ENCODE measurements at regions of chr4 and their contacts with region 1.

Region 1: GRCh38 chr4:12852338-12853307 is 631.5 kb downstream of the RAB28 start:
- DNase-seq: peak; percentile 76
- ATAC-seq: peak; percentile 98
- H3K4me3 ChIP-seq: peak overlapping the region in 2 of 3 experiments; percentile 11 to 17; a peak in 1 of 6 replicates
- H3K27ac ChIP-seq: peak overlapping the region; percentile 13
- H3K4me1 ChIP-seq: peaks cover 16% of the 10 kb centered on the region
- H3K27me3 ChIP-seq: no peaks in the 10 kb centered on the region
- CTCF ChIP-seq: peak; percentile 83
- EP300 ChIP-seq: no peak
- POLR2A ChIP-seq: no peak
- RAD21 ChIP-seq: peak; percentile 87

Region 2: DNA sequence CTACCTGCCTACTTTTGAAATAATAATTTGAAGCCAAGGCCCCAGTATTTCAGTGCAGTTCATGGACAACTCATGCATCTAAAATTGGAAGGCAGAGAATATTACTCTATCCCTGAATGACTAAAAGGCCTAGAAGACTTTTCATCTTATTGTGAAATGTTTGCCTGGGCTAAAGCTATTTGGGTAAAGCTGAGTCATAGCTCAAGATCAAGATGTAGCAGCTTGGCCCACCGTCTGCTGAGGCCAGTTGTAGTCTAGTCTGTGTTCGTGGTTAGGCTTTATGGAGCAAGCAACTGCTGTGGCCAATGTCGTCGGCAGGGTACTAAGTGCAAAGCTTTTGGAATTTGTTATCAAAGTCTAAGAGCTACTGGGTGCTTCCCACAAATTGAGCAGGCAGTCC is 297.6 kb before region 1 on chr4:
- CTCF ChIA-PET with region 1: no interaction called
- POLR2A ChIA-PET with region 1: no interaction called
- in situ Hi-C with region 1: no loop called
- intact Hi-C with region 1: no loop called
- DNase-seq: no peak
- ATAC-seq: peak; percentile 82
- H3K4me3 ChIP-seq: no peak overlapping the region
- H3K27ac ChIP-seq: no peak overlapping the region
- H3K4me1 ChIP-seq: peaks cover 10% of the 10 kb centered on the region
- H3K27me3 ChIP-seq: no peaks in the 10 kb centered on the region
- CTCF ChIP-seq: no peak
- EP300 ChIP-seq: peak in 1 of 2 experiments; percentile 22; a peak in 1 of 4 replicates
- POLR2A ChIP-seq: no peak
- RAD21 ChIP-seq: no peak

Region 3: GRCh38 chr4:13059019-13059418 is 206.4 kb after region 1 on chr4:
- CTCF ChIA-PET with region 1: no interaction called
- POLR2A ChIA-PET with region 1: no interaction called
- in situ Hi-C with region 1: no loop called
- intact Hi-C with region 1: loop called (anchors 5 kb)
- DNase-seq: no peak
- ATAC-seq: peak; percentile 61; the same call in 2 of the 3 replicates
- H3K4me3 ChIP-seq: no peak overlapping the region
- H3K27ac ChIP-seq: no peak overlapping the region
- H3K4me1 ChIP-seq: no peaks in the 10 kb centered on the region
- H3K27me3 ChIP-seq: no peaks in the 10 kb centered on the region
- CTCF ChIP-seq: no peak
- EP300 ChIP-seq: no peak
- POLR2A ChIP-seq: no peak
- RAD21 ChIP-seq: no peak

Region 4: GRCh38 chr4:13159041-13159620 is 306.5 kb after region 1 on chr4:
- CTCF ChIA-PET with region 1: no interaction called
- POLR2A ChIA-PET with region 1: no interaction called
- in situ Hi-C with region 1: no loop called
- intact Hi-C with region 1: loop called (anchors 5 kb)
- DNase-seq: peak; percentile 28
- ATAC-seq: peak; percentile 88
- H3K4me3 ChIP-seq: no peak overlapping the region
- H3K27ac ChIP-seq: no peak overlapping the region
- H3K4me1 ChIP-seq: peaks cover 19% of the 10 kb centered on the region
- H3K27me3 ChIP-seq: no peaks in the 10 kb centered on the region
- CTCF ChIP-seq: no peak
- EP300 ChIP-seq: peak in 1 of 2 experiments; percentile 37; a peak in 1 of 4 replicates
- POLR2A ChIP-seq: no peak
- RAD21 ChIP-seq: no peak

Region 5: GRCh38 chr4:13248621-13249298 is 396.1 kb after region 1 on chr4:
- CTCF ChIA-PET with region 1: interaction called, 17 read pairs
- POLR2A ChIA-PET with region 1: interaction called, 5 read pairs
- in situ Hi-C with region 1: loop called (anchors 10 kb)
- intact Hi-C with region 1: loop called (anchors 1 kb)
- DNase-seq: peak; percentile 13
- ATAC-seq: peak; percentile 37; the same call in 1 of the 3 replicates
- H3K4me3 ChIP-seq: no peak overlapping the region
- H3K27ac ChIP-seq: no peak overlapping the region
- H3K4me1 ChIP-seq: peaks cover 13% of the 10 kb centered on the region; the same call in 1 of the 2 replicates
- H3K27me3 ChIP-seq: no peaks in the 10 kb centered on the region
- CTCF ChIP-seq: peak; percentile 49
- EP300 ChIP-seq: no peak
- POLR2A ChIP-seq: no peak
- RAD21 ChIP-seq: no peak

Region 6: DNA sequence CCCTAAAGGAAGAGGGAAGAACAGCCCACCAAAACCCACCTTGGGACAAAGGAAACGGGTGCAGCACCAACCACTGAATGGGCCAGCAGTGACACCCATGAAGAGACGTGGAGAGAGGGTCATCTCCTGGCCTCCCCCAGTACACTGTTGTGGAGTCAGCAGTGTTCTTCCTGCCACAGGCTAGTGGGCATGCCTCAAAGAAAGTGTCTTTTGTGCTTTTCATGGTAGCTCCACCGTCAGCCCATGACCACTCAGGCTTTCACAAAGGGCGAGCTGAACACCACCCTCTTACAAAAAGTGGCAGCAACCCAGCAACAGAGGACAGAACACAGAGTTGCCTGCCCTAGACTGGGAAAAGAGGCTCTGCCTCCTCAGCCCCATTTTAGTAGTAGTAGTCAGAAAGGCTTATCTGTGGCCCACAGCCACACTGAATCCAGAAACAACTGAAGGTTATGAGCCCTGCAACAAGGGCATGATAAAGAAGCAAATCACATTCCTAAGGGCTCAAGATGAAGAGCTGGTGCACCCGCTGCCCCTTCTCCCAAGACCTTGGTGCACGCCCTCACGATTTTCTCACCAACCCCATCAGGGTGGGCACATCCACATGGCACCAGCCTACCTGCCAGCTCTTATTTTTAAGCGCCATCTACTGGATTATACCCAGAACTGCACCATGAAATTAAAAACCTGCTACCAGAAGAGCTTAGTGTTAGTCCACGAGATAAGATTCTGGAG is 578.4 kb after region 1 on chr4:
- CTCF ChIA-PET with region 1: no interaction called
- POLR2A ChIA-PET with region 1: no interaction called
- in situ Hi-C with region 1: no loop called
- intact Hi-C with region 1: loop called (anchors 1 kb)
- DNase-seq: no peak
- ATAC-seq: no peak
- H3K4me3 ChIP-seq: no peak overlapping the region
- H3K27ac ChIP-seq: no peak overlapping the region
- H3K4me1 ChIP-seq: peaks cover 8% of the 10 kb centered on the region; the same call in 1 of the 2 replicates
- H3K27me3 ChIP-seq: no peaks in the 10 kb centered on the region; a peak in 1 of 5 replicates
- CTCF ChIP-seq: peak; percentile 42
- EP300 ChIP-seq: no peak
- POLR2A ChIP-seq: no peak
- RAD21 ChIP-seq: no peak

Region 7: GRCh38 chr4:13548984-13549546 is 696.4 kb after region 1 on chr4:
- CTCF ChIA-PET with region 1: interaction called, 19 read pairs
- POLR2A ChIA-PET with region 1: no interaction called
- in situ Hi-C with region 1: loop called (anchors 5 kb)
- intact Hi-C with region 1: loop called (anchors 1 kb)
- DNase-seq: peak; percentile 65
- ATAC-seq: peak; percentile 72
- H3K4me3 ChIP-seq: peak overlapping the region; percentile 71 to 80 (median 76)
- H3K27ac ChIP-seq: no peak overlapping the region
- H3K4me1 ChIP-seq: peaks cover 28% of the 10 kb centered on the region
- H3K27me3 ChIP-seq: peaks cover 2 to 12% of the 10 kb centered on the region in 2 experiments; a peak in 4 of 5 replicates
- CTCF ChIP-seq: peak; percentile 95
- EP300 ChIP-seq: no peak
- POLR2A ChIP-seq: no peak
- RAD21 ChIP-seq: peak; percentile 90

Measured in HepG2 (cell line).